ENCODE measurements at regions of chr11 and their contacts with region 1.

Region 1: GRCh38 chr11:47578524-47579460 is at the starts of genes KBTBD4 and NDUFS3:
- DNase-seq: peak; percentile 78 to 92 (median 84)
- H3K4me3 ChIP-seq: peak within 1 kb of the TSS; percentile 89
- H3K4me3 Mint-ChIP-seq: peak within 1 kb of the TSS; percentile 96 to 100 (median 99)
- H3K27ac ChIP-seq: peak within 1 kb of the TSS; percentile 84
- H3K27ac Mint-ChIP-seq: peak within 1 kb of the TSS; percentile 92 to 100 (median 98)
- H3K4me1 ChIP-seq: peaks cover 34% of the 10 kb centered on the region
- H3K4me1 Mint-ChIP-seq: peaks cover 28 to 55% (median 34%) of the 10 kb centered on the region in 3 donors
- H3K27me3 ChIP-seq: no peaks in the 10 kb centered on the region
- H3K27me3 Mint-ChIP-seq: peaks cover 0 to 3% of the 10 kb centered on the region in 2 donors
- total RNA-seq, gene KBTBD4: 24.8 to 26.4 TPM
- total RNA-seq, gene NDUFS3: 147 to 157 TPM

Region 2: GRCh38 chr11:47454180-47454644 is 124.6 kb before region 1 on chr11:
- CTCF ChIA-PET with region 1: no interaction called
- POLR2A ChIA-PET with region 1: no interaction called
- DNase-seq: peak; percentile 34 to 79 (median 55)
- H3K4me3 ChIP-seq: no peak overlapping the region
- H3K4me3 Mint-ChIP-seq: no peak overlapping the region
- H3K27ac ChIP-seq: no peak overlapping the region
- H3K27ac Mint-ChIP-seq: no peak overlapping the region
- H3K4me1 ChIP-seq: no peaks in the 10 kb centered on the region
- H3K4me1 Mint-ChIP-seq: peaks cover 0 to 6% (median 5%) of the 10 kb centered on the region in 3 donors
- H3K27me3 ChIP-seq: no peaks in the 10 kb centered on the region
- H3K27me3 Mint-ChIP-seq: no peaks in the 10 kb centered on the region

Region 3: DNA sequence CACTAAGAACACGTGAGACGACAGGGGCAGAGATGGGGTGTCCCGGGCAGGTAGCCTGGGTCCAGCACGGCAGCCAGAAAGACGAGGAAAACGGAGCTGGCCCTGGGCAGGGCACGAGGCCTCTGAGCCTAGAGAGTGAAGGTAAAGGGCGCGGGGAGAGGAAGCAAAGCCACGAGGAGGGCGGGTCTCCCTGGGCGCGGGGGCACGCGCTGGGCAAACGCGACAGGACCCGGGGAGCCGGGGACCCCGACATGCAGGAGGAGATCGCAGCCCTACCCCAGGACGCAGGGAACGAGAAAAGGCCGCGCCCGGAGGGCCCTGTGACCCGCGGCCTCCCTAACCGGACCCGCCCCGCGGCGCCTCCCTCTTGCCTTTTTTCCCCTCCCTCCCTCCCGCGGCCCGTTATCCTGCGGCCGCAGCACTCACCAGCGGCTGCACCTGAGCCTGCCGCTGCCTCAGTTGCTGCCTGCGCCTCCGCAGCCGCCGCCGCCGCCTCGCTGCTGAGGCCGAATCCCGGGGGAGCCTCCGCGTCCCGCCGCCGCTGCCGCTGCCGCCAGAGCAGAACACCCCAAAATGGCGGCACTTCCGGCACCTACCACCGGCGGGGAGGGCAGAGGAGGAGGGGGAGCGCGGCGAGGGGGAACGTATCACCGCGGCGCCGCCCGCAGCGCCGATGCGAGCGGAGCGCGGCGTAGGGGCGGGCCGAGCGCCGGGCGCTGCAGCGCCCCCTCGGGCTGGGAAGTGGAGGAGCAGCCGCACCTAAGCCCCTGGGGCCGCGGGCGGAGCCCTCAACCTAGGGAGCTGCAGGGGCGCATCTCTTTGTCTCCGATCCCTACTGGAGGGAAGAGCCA is 26.0 kb before region 1 on chr11 and contains the start of gene CELF1:
- CTCF ChIA-PET with region 1: interaction called, 10 read pairs
- POLR2A ChIA-PET with region 1: interaction called, 13 read pairs
- DNase-seq: peak; percentile 88 to 94 (median 91)
- H3K4me3 ChIP-seq: peak within 1 kb of the TSS; percentile 66
- H3K4me3 Mint-ChIP-seq: peak within 1 kb of the TSS; percentile 95 to 100 (median 97)
- H3K27ac ChIP-seq: peak within 1 kb of the TSS; percentile 59
- H3K27ac Mint-ChIP-seq: peak within 1 kb of the TSS; percentile 95 to 99 (median 98)
- H3K4me1 ChIP-seq: peaks cover 44% of the 10 kb centered on the region
- H3K4me1 Mint-ChIP-seq: peaks cover 40 to 55% (median 55%) of the 10 kb centered on the region in 3 donors
- H3K27me3 ChIP-seq: no peaks in the 10 kb centered on the region
- H3K27me3 Mint-ChIP-seq: no peaks in the 10 kb centered on the region
- total RNA-seq, gene CELF1: 160 to 168 TPM

Region 4: GRCh38 chr11:47656260-47656885 is 77.6 kb after region 1 on chr11:
- CTCF ChIA-PET with region 1: no interaction called
- POLR2A ChIA-PET with region 1: no interaction called
- DNase-seq: no peak
- H3K4me3 ChIP-seq: no peak overlapping the region
- H3K4me3 Mint-ChIP-seq: no peak overlapping the region
- H3K27ac ChIP-seq: no peak overlapping the region
- H3K27ac Mint-ChIP-seq: no peak overlapping the region
- H3K4me1 ChIP-seq: no peaks in the 10 kb centered on the region
- H3K4me1 Mint-ChIP-seq: no peaks in the 10 kb centered on the region
- H3K27me3 ChIP-seq: no peaks in the 10 kb centered on the region
- H3K27me3 Mint-ChIP-seq: peaks cover 5 to 7% of the 10 kb centered on the region in 2 donors

Measured in CD8-positive, alpha-beta memory T cell (primary cell).